Activated naive CD4-positive, alpha-beta T cell treated with anti-CD3 and anti-CD28 coated beads for 36 hours (primary cell): ENCODE measurements at regions of chr13 and their contacts with region 1.

Region 1: DNA sequence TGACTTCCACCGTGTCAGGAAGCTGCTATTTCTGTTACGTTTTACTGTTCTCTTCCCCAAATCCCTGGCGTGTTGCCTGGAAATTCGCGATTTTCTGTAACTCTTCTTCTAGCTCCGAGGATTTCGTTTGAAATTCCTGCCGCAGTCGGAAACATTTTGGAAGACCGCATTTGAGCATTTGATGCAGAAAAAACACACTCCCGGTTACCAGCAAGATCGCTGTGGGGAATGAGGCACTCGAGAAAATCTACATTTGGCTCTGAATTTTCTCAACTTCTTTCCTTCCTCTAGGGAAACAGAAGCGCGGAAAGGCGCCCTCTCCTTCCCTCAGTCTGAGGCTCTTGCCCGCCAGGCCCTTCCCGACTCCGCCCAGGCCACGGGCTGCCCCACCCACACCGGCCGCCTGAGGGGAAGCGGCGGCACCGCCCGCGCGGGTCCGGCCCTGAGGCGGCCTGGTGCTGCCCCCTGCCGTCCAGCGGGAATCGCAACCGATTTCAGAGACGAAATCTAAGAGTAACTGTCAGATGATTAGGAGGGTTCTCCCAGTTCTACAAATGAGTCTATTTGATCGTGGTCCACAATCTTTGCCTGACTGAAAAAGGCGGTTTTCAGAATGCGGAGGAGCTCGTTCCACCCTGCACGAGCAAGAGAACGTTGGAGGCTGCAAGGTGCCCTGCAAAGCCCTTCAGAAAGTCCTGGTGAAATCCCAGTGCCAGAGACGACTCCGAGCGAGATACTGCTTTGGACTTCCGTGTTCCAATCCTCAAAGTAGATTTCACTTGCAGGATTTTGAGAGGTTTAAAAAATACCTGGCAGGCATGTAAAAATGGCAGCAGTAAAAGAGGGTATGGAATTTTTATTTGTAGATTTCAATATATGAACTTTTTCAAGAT is 18.4 kb upstream of the TUBGCP3 start:
- DNase-seq: peak; percentile 91
- H3K4me3 Mint-ChIP-seq: peak overlapping the region; percentile 74
- H3K27ac Mint-ChIP-seq: no peak overlapping the region
- H3K4me1 Mint-ChIP-seq: peaks cover 3% of the 10 kb centered on the region
- H3K27me3 Mint-ChIP-seq: peaks cover 5% of the 10 kb centered on the region

Region 2: DNA sequence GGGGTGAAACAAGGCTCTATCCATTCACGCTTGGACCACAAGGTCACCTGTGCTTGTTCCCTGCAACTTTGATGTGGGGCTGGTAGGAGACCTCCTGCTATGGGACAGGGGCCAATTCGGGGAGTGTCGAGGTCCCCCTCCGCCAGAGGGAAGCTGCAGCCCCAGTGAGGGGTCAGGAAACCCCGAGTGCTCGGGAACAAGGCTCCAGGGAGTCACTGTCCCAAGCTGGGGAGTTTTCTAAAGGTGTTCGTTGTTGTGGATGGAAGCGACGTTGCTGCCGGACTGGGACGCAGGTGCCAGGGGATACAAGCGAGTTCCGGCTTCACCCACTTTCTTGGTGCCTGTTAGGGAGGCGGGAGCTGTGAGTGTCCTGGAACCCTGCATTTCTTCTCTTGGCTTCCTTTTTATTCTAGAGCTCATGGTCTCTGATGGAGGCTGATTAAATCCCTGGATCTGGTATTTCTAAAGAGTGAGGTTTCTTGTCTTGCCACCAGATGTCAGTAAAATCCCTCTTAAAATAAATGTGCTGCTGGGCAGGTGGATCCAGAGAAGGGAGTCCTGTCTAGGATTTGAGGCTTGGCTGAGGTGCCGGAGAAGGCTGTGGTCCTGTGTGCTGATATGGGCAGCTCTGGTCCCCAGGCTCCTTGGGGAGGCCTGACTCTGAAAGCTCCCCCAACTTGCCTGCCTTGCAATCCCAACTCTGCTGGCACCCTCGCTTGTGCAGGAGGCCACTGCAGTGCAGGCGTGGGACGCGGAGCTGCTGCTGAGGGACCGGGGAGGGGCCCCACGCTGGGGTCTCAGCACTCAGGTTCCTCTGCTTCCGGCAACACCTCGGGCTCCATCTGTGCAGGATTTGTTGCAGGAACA is 1132.0 kb before region 1 on chr13:
- CTCF ChIA-PET with region 1: interaction called, 5 read pairs
- intact Hi-C with region 1: loop called (anchors 1 kb)
- DNase-seq: no peak
- H3K4me3 Mint-ChIP-seq: no peak overlapping the region
- H3K27ac Mint-ChIP-seq: no peak overlapping the region
- H3K4me1 Mint-ChIP-seq: no peaks in the 10 kb centered on the region
- H3K27me3 Mint-ChIP-seq: no peaks in the 10 kb centered on the region

Region 3: GRCh38 chr13:112062571-112063570 is 543.5 kb before region 1 on chr13:
- CTCF ChIA-PET with region 1: no interaction called
- intact Hi-C with region 1: loop called (anchors 5 kb)
- DNase-seq: no peak
- H3K4me3 Mint-ChIP-seq: no peak overlapping the region
- H3K27ac Mint-ChIP-seq: no peak overlapping the region
- H3K4me1 Mint-ChIP-seq: peaks cover 13% of the 10 kb centered on the region
- H3K27me3 Mint-ChIP-seq: peaks cover 75% of the 10 kb centered on the region

Region 4: GRCh38 chr13:112443995-112444860 is 162.1 kb before region 1 on chr13:
- CTCF ChIA-PET with region 1: interaction called, 7 read pairs
- intact Hi-C with region 1: loop called (anchors 1 kb)
- DNase-seq: peak; percentile 78
- H3K4me3 Mint-ChIP-seq: no peak overlapping the region
- H3K27ac Mint-ChIP-seq: no peak overlapping the region
- H3K4me1 Mint-ChIP-seq: no peaks in the 10 kb centered on the region
- H3K27me3 Mint-ChIP-seq: peaks cover 17% of the 10 kb centered on the region

Region 5: DNA sequence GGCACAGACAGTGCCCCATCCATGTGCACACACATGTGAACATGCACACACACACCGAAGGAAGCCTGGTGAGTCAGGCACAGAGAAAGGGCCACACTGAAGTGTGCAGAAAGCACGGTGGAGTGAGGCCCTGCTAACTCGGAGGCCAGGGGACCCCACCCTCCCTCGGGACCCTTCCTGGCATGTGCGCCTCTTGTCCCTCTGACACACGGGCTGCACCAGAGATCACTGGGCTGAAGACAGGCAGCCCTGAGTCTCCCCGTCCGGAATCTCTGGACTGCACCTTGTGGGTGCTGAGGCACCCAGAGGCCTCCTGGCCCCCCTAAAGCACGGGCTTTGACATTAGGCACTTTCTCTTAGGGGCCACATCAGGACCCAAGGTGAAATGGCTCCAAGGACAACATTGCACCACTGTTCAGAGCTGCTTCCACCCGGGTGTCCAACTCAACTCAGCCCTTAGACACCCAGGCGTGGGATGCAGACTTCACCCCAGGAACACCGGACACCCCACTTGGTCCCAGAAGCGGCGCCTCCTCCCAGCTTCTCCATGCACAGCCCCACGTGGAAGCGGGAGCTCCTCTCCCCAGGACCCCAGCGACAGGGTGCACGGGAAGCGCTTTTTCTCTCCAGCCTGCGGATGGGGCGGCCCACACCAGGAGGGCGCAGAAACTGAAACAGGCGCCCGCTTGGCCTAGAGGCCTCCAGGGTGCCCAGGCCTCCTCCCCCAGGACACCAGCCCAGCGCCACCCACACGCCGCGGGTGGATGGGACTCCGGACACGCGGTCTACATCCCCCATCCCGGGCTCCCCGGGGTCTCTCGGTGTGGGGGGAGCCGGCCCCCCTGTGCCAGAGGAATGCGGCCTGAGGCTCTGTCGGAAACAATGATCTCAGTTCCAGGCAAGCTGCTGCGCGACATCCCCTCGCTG is 140.0 kb before region 1 on chr13:
- CTCF ChIA-PET with region 1: no interaction called
- intact Hi-C with region 1: no loop called
- DNase-seq: no peak
- H3K4me3 Mint-ChIP-seq: no peak overlapping the region
- H3K27ac Mint-ChIP-seq: no peak overlapping the region
- H3K4me1 Mint-ChIP-seq: no peaks in the 10 kb centered on the region
- H3K27me3 Mint-ChIP-seq: peaks cover 9% of the 10 kb centered on the region

Region 6: GRCh38 chr13:112510002-112510780 is 96.2 kb before region 1 on chr13:
- CTCF ChIA-PET with region 1: interaction called, 7 read pairs
- intact Hi-C with region 1: loop called (anchors 1 kb)
- DNase-seq: no peak
- H3K4me3 Mint-ChIP-seq: no peak overlapping the region
- H3K27ac Mint-ChIP-seq: no peak overlapping the region
- H3K4me1 Mint-ChIP-seq: no peaks in the 10 kb centered on the region
- H3K27me3 Mint-ChIP-seq: no peaks in the 10 kb centered on the region

Region 7: GRCh38 chr13:112525356-112525945 is 80.9 kb before region 1 on chr13:
- CTCF ChIA-PET with region 1: interaction called, 6 read pairs
- intact Hi-C with region 1: loop called (anchors 5 kb)
- DNase-seq: no peak
- H3K4me3 Mint-ChIP-seq: no peak overlapping the region
- H3K27ac Mint-ChIP-seq: no peak overlapping the region
- H3K4me1 Mint-ChIP-seq: no peaks in the 10 kb centered on the region
- H3K27me3 Mint-ChIP-seq: no peaks in the 10 kb centered on the region

Region 8: DNA sequence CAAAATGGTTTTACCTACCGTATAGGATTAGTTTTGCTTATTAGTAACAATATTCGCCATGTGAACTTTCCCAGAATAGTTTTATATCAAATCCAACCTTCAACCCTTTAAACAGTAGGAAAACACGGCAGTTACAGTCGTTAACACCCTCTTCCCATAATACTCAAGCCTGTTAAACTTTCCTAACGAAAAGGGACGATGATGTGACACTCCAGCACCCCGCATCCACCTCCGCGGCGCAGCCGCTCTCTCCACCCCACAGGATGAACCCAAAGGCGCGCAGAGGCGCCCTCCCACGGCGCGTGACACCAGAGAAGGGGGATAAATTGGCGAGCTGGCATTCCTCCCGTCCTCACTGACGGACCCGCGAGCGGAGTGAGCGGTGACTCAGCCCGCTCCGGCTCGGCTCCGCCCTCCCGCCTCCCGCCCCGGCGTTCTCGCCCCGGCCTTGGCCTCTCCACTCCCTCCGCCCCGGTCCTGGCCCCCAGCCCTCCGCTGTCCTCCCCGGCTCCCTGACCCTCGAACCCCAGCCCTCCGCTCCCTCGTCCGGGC is 19.1 kb before region 1 on chr13:
- CTCF ChIA-PET with region 1: interaction called, 30 read pairs
- intact Hi-C with region 1: no loop called
- DNase-seq: peak; percentile 78
- H3K4me3 Mint-ChIP-seq: peak overlapping the region; percentile 96
- H3K27ac Mint-ChIP-seq: peak overlapping the region; percentile 93
- H3K4me1 Mint-ChIP-seq: peaks cover 47% of the 10 kb centered on the region
- H3K27me3 Mint-ChIP-seq: no peaks in the 10 kb centered on the region

Region 9: GRCh38 chr13:112638157-112638750 is 31.9 kb after region 1 on chr13:
- CTCF ChIA-PET with region 1: no interaction called
- intact Hi-C with region 1: no loop called
- DNase-seq: no peak
- H3K4me3 Mint-ChIP-seq: no peak overlapping the region
- H3K27ac Mint-ChIP-seq: no peak overlapping the region
- H3K4me1 Mint-ChIP-seq: peaks cover 5% of the 10 kb centered on the region
- H3K27me3 Mint-ChIP-seq: peaks cover 19% of the 10 kb centered on the region

Region 10: DNA sequence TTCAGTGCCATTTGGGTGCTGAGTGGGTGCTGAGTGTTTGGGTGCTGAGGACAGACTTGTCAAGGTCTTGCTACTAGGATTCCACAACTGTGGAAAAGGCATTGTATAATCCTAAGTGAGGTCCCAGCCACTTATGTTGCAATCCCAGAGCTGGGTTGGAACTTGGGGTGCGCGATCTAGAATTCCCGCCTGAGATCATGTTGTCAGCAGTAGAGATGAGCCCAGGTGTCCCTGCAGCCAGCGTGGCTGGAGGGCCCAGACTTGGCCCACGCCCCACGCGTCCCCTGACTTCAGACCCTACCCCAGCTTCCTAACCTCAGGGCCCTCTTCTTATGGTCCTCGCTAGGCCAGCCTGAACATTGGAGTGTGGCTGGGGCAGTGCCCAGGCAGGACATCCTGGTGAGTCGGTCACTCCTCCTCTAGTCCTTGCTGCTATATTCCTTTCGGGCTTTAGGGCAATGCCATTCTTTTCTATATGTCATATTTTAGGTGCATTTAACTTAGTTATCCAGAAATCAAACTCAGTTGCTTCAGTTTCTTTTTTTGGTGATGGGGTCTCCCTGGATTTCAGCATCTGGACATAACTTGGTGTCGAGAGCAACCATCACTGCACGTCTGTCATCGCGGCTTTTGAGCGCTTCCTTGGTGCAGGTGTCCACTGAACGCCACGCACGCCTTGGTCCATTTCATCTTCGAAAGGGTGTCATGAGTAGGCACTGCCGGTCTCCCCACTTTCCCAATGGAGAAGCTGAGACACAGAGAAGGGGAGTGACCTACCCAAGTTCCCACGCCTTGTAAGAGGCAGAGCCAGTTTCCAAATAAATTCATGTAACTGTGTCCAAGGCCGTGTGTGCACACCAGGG is 452.9 kb after region 1 on chr13:
- CTCF ChIA-PET with region 1: no interaction called
- intact Hi-C with region 1: no loop called
- DNase-seq: no peak
- H3K4me3 Mint-ChIP-seq: no peak overlapping the region
- H3K27ac Mint-ChIP-seq: no peak overlapping the region
- H3K4me1 Mint-ChIP-seq: no peaks in the 10 kb centered on the region
- H3K27me3 Mint-ChIP-seq: no peaks in the 10 kb centered on the region